Head of caudate nucleus (tissue), 42 donors: ENCODE measurements at regions of chr2 and their contacts with region 1.

Region 1: DNA sequence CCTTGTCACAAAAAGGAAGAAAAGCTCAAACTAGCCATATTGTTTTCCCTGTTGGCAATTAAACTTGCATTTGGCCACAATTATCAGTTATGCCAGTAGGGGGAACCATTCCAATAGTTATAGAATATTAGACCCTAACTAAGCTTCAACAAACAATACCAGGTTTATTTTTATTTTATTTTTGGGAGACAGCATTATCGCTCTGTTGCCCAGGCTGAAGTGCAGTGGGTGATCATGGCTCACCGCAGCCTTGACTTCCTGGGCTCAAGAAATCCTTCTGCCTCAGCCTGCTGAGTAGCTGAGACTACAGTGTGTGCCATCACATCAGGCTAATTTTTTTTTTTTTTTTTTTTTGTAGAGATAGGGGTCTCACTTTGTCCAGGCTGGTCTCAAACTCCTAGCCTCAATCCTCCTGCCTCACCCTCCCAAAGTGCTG is 102.1 kb downstream of the ATAD2B start:
- DNase-seq: peak in 11 of 42 donors; percentile 9 to 75 (median 42)

Region 2: DNA sequence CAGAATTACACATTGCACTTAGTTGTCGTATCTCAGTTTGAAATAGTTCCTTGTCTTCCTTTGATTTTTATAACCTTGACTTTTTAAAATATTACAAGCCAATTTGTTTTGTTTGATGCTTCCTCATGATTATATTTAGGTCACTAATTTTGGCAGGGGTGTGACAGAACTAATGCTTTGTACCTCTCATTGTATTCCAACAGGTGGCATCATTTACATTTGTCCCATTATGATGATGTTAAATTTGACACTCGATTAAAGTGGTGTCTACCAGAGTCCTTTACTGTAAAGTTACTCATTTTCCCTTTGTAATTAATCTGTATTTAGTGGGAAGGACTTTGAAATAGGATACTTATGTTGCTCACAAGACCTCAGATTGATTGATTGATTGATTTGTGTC is 163.6 kb after region 1 on chr2:
- intact Hi-C with region 1: no loop called
- DNase-seq: no peak

Region 3: DNA sequence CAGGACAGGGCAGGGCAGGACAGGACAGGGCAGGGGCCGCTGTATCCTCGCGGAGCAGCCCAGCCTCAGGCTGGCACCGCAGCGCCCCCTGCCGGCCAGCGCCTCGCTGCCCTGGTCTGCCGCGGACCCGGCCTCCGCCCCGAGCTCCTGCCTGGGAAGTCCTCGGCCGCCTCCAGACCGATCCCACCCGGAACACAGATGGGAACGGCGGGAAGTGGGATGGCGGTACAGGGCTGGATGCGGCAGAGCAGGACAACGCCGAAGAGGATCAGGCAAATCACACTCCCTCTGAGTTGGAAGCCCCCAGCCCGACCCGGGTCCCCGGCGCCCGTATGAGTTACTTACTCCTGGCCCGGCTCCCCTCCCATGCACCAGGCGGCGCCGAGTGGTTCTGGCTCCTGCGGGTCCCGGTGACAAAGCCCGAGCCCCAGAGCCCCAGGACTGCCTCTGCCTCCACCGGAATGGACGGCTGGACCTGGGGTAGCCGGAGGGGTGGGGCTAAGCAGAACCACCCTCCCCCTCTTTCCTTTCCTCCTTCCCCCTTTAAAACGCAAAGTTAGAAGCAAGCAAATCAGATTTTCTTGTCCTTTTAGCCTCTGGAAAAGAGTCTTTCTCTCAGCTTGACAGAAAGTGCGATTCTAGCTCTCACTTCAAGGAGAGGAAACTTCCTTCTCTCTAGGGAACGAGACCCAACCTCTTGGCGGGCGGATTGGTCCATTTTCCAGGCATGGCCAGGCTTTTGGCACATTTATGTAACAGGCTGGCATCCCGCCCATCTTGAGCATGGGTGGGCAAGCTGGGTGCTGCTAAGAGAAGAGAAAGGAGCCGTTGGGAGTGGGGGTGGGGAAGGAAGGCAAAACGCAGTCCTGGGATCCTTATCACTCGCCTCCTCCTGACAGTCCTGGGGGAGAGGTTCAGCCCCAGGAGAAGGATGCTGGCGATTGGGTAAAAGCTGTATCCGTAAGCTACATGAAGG is 259.9 kb after region 1 on chr2 and contains the start of gene TP53I3:
- intact Hi-C with region 1: loop called (anchors 10 kb)
- DNase-seq: peak; percentile 50 to 93 (median 84)